CD8-positive, alpha-beta memory T cell (primary cell): ENCODE measurements at regions of chr1 and their contacts with region 1.

Region 1: DNA sequence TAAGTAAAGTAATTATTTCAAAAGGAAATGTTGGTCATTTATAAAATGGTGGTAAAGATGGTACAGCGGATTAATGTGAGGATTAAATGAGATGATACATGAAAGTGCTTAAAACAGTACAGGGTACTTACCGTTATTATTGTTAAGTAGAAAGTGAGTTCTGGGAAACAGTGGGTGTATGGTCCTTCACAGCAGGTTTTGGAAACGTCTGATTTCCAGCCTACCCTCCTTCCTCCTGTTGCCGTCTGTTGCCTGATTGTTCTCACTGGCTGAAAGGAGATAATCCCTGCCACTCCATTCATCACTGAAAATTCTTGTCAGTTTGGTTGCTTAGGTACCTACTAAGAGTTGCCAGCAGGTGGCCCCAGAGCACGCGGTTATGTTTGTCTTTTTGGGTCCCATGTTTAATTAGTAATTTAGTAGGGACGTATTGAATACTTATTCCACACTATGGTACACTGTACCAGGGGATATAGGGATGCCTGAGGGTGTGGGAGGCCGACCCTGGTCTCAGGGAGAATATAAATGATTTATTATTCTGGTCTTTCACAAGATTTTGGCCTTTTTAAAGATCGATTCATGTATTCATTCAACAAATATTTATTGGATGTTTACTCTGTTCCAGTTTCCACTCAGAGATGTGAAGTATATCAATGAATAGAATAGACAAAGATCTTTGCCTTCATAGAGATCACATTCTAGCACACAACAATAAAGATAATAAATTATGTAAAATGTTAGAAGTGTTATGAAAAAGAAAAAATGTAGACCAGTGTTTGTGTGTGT is 30.8 kb upstream of the RPTN start:
- DNase-seq: peak; percentile 45 to 74 (median 50)
- H3K4me3 ChIP-seq: peak overlapping the region; percentile 57
- H3K4me3 Mint-ChIP-seq: peak overlapping the region; percentile 78 to 91 (median 84)
- H3K27ac ChIP-seq: no peak overlapping the region
- H3K27ac Mint-ChIP-seq: peak overlapping the region in 4 of 8 donors; percentile 5 to 70 (median 47)
- H3K4me1 ChIP-seq: peaks cover 5% of the 10 kb centered on the region
- H3K4me1 Mint-ChIP-seq: peaks cover 5 to 15% (median 10%) of the 10 kb centered on the region in 3 donors
- H3K27me3 ChIP-seq: no peaks in the 10 kb centered on the region
- H3K27me3 Mint-ChIP-seq: peaks cover 0 to 3% of the 10 kb centered on the region in 2 donors

Region 2: DNA sequence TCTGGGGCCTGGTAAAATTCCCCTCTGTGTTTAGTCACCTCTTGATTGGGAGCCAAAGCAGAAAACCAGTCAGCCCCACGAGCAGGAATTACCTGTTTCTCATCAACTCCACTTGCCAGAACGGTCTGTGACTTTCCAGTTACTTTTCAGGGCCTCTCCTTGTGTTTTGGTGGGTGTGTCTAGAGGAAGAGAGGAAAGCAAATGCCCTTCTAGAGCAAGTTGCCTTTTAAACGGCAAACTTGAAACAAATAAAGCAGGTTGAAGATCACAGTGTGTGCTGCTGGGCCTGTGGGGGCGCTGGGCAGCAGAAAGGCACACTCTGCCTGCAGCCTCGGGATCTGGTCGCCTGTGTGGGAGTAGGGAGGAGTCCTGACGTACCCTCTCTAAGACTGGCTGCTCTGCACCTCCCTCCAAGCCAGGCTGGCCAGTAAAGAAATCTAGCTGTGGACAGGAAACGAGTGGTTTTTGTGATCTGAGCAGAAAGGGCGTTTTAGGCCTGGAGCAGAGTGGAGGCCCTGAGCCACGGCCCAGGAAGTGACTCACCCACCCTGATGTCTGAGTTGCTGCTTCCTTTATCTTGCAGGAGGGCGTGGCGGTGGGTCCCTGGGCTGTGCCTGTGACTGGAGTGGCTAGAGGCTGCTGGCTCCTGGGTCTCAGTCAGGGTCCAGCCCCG is 142.0 kb before region 1 on chr1:
- CTCF ChIA-PET with region 1: interaction called, 143 read pairs
- POLR2A ChIA-PET with region 1: no interaction called
- DNase-seq: peak; percentile 76 to 91 (median 81)
- H3K4me3 ChIP-seq: peak overlapping the region; percentile 45
- H3K4me3 Mint-ChIP-seq: peak overlapping the region; percentile 42 to 88 (median 79)
- H3K27ac ChIP-seq: peak overlapping the region; percentile 87
- H3K27ac Mint-ChIP-seq: peak overlapping the region; percentile 95 to 99 (median 99)
- H3K4me1 ChIP-seq: peaks cover 23% of the 10 kb centered on the region
- H3K4me1 Mint-ChIP-seq: peaks cover 18 to 31% (median 30%) of the 10 kb centered on the region in 3 donors
- H3K27me3 ChIP-seq: no peaks in the 10 kb centered on the region
- H3K27me3 Mint-ChIP-seq: peaks cover under 1 to 4% of the 10 kb centered on the region in 2 donors

Region 3: DNA sequence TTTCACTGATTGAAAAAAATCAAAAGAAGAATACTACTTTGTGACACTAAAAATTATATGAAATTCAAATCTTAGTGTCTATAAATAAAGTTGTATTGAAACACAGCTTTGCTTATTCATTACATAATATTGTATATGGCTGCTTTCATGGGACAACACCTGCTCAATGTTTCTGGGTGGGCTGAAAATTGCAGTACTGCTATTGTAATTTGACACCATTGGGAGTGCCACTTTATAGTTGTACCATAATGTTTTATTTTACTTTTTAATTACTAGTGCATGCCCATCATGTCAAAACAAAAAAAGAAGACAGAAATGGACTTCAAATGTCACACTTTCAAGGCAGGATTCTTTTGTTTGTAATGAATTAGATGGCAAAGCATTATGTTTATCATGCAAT is 14.3 kb before region 1 on chr1:
- CTCF ChIA-PET with region 1: interaction called, 10 read pairs
- POLR2A ChIA-PET with region 1: no interaction called
- DNase-seq: no peak
- H3K4me3 ChIP-seq: no peak overlapping the region
- H3K4me3 Mint-ChIP-seq: no peak overlapping the region
- H3K27ac ChIP-seq: no peak overlapping the region
- H3K27ac Mint-ChIP-seq: no peak overlapping the region
- H3K4me1 ChIP-seq: no peaks in the 10 kb centered on the region
- H3K4me1 Mint-ChIP-seq: no peaks in the 10 kb centered on the region
- H3K27me3 ChIP-seq: no peaks in the 10 kb centered on the region
- H3K27me3 Mint-ChIP-seq: peaks cover 9 to 16% of the 10 kb centered on the region in 2 donors

Region 4: DNA sequence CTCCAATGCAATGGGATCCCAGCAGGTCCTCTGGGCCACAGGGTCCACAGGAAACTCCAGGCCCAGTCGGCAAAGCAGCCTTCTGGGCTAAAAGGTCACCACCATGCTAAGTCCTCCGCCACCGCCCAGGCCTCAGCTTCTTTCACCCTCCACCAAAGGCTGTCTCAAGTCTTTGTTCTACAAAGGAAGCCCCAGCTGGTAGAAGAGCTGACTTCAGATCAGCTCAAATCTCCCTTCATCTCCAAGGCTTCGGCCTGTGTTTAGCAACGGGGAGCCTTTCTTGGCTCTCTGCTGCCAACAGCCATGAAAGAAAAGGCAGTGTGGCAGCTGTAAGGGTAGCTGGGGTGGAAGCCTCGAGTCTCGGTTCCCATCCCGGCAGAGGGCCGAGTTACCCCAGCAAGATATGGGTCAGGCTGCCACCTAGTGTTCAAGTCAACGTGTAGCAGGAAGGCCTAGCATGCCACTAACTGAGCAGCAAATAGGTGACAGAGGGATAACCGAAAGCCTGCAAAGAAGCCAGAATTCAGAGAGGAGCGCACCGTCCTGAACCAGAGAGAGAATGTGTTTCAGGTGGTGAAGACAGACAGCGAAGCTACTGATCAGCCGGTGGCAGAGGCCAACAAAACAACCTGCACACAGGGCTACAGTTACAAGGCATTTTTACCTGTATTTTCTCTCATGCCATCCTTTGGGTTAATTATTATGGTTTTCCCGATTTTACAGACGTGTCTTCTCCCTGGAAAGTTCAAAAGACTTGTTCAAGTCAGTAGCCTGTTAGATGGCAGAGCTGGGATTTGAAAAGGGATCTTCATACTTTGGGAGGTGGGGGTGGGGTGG is 251.0 kb after region 1 on chr1:
- CTCF ChIA-PET with region 1: interaction called, 29 read pairs
- POLR2A ChIA-PET with region 1: no interaction called
- DNase-seq: peak; percentile 40 to 80 (median 52)
- H3K4me3 ChIP-seq: no peak overlapping the region
- H3K4me3 Mint-ChIP-seq: no peak overlapping the region
- H3K27ac ChIP-seq: no peak overlapping the region
- H3K27ac Mint-ChIP-seq: peak overlapping the region in 2 of 8 donors; percentile 39 to 79
- H3K4me1 ChIP-seq: no peaks in the 10 kb centered on the region
- H3K4me1 Mint-ChIP-seq: peaks cover 3 to 6% (median 4%) of the 10 kb centered on the region in 3 donors
- H3K27me3 ChIP-seq: no peaks in the 10 kb centered on the region
- H3K27me3 Mint-ChIP-seq: peaks cover 10 to 32% of the 10 kb centered on the region in 2 donors